Activated T-helper 1 cell treated with anti-CD3 and anti-CD28 coated beads, Interleukin-12 subunit alpha, Interleukin-12 subunit beta, Interleukin-2, Interleukin-4 antibody, amounts not matched to agents 30 ng/mL and 10 ng/mL and 1 ng/mL, durations not matched to agents 14 hours and 24 hours and 36 hours (primary cell): ENCODE measurements at regions of chr3 and their contacts with region 1.

Region 1: DNA sequence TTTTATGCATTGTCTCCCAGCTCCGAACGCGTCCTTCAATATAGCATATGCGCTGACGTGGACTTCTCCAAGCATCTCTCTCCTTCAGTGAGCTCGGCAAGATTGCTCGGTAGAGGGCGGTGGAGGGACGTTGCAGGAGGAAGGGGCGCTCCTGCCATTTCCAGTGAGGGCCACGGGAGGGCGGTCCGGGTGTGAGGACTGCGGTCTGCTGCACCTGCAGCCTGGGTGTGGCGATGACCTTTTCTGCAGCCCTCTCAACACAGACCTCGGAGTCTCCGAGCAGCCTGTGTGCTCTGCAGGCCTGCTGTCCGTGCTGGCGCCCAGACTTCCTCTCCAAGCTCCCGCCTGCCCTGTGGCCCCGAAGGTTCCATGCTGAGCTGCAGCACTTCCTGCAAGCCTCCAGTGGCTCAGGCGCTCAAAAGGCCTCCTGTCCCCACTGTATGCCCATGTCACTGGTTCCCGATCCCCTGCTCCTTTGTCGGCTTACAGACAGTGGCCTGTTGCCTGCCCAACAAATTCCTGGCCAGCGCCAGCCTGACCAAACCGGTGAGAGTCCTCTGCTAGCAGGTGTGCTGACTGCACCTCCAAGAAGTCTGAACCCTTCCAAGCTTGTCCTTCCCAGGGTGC is 8.9 kb upstream of the RTP3 start:
- DNase-seq: peak; percentile 85
- H3K4me3 Mint-ChIP-seq: no peak overlapping the region
- H3K27ac Mint-ChIP-seq: no peak overlapping the region
- H3K4me1 Mint-ChIP-seq: peaks cover 9% of the 10 kb centered on the region
- H3K27me3 Mint-ChIP-seq: peaks cover 4% of the 10 kb centered on the region

Region 2: DNA sequence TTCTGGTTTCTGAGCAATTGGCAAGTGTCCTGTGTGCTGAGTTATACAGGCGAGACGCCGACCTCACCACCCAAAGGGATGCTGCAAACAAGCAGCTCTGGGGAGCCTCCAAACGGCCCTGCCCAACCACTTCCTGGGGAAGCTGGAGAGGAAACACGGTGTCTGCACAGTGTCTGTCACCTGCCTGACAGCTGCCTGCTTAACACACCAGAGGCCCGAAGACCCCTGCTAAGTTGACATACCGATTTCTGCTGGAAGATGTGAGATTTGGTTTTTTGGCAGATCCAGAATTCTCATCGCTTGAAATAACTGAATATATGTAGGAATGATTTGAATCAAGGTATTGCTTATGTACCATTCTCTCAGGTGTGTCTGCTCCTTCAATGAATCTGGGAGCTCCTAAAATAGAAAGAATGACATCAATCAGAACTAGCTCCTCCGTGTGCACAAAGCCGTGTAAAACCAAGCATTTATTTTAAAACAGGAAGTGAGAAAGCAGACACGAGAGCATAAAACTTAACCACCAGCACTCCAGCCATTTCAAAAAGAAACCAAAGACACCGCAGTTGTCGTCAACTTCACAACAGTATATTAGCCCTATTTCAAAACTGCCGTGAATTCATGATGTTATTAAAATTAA is 50.1 kb after region 1 on chr3:
- intact Hi-C with region 1: loop called (anchors 5 kb)
- DNase-seq: peak; percentile 75
- H3K4me3 Mint-ChIP-seq: peak overlapping the region; percentile 74
- H3K27ac Mint-ChIP-seq: peak overlapping the region; percentile 71
- H3K4me1 Mint-ChIP-seq: peaks cover 52% of the 10 kb centered on the region
- H3K27me3 Mint-ChIP-seq: peaks cover 16% of the 10 kb centered on the region

Region 3: DNA sequence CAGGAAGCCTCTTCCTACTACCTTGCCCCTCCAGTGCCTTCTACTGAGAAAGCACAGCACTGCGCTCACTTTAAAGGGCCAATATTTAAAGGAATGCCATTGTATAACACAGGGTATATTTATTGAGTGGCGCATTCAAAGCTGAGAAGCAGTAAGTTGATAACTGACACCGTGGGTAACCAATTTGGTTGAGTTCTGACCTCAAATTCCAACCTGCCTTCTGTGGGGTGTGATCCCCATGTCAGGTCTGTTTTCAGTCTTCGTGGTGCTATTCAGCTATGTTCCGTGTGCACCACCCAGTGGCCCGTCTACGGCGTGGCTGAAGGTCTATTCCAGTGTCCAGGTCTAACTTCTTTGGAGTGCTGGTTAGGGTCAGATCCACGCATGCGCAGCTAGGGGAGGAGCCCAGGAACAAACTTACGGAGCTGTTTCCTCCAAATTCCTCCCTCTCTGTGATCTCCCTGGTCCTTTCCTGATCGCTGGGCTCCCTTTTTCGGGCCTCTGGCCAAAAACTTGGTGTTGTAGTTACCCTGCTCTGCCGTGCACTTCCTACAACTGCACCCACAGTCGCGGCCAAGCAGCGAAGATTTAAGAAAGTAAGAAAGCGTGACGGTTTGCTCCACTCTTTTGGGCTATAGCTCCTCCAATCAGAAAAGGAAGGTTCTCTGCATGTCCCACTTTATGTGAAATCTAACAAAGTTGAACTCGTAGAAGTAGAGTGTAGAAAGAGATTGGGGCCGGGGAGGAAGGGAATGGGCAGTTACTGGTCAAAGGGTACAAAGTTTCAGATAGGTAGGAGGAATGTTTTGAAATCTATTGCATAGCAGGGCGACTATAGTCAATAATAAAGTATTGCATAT is 69.6 kb after region 1 on chr3:
- intact Hi-C with region 1: loop called (anchors 1 kb)
- DNase-seq: peak; percentile 57
- H3K4me3 Mint-ChIP-seq: peak overlapping the region; percentile 82
- H3K27ac Mint-ChIP-seq: no peak overlapping the region
- H3K4me1 Mint-ChIP-seq: peaks cover 13% of the 10 kb centered on the region
- H3K27me3 Mint-ChIP-seq: peaks cover 44% of the 10 kb centered on the region

Region 4: DNA sequence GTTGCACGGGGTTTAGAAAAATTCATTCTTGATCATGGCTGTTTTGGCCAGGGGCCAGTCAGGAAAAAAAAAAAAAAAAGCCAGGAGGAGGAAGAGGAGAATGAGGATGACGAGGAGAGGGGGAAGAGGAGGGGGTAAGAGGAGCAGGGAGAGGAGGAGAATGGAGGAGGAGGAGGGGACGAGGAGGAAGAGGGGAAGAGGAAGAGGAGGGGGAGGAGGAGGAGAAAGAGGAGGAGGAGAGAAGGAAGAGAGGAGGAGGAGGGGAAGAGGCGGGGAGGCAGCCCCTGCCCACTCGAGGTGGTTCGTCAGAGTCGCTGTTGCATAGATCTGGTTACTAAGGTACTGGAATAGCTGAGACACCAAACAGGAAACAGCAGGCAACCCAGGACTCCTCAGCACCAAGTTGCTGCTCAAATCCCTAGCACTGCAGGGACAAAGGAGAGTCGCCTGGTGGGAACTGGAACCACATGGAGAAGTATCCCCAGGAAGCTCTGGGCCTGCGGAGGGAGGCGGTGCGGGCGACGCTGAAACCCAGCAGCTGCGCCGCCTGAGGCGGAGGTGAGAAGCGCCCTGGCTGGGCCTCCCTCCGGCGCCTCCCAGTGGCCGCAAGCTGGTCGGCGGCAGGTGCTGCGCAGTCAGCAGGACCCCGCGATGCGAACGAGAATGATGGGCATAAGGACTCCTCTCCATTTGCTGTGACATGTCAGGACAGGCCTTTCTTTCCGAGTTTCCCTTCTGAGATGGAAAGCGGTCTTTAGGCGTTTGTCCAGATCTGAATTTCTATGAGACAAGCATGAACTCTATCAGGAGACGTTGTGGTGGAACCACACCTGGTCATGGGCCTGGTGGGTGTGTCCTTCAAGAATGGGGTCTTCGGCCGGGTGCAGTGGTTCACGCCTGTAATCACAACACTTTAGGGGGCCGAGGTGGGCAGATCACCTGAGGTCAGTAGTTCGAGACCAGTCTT is 141.0 kb after region 1 on chr3:
- intact Hi-C with region 1: loop called (anchors 1 kb)
- DNase-seq: peak; percentile 68
- H3K4me3 Mint-ChIP-seq: peak overlapping the region; percentile 58
- H3K27ac Mint-ChIP-seq: peak overlapping the region; percentile 40
- H3K4me1 Mint-ChIP-seq: peaks cover 21% of the 10 kb centered on the region
- H3K27me3 Mint-ChIP-seq: peaks cover 7% of the 10 kb centered on the region

Region 5: GRCh38 chr3:46895204-46895660 is 406.4 kb after region 1 on chr3:
- intact Hi-C with region 1: loop called (anchors 1 kb)
- DNase-seq: peak; percentile 61
- H3K4me3 Mint-ChIP-seq: no peak overlapping the region
- H3K27ac Mint-ChIP-seq: no peak overlapping the region
- H3K4me1 Mint-ChIP-seq: peaks cover 4% of the 10 kb centered on the region
- H3K27me3 Mint-ChIP-seq: peaks cover 55% of the 10 kb centered on the region

Region 6: GRCh38 chr3:47016934-47017435 is 528.1 kb after region 1 on chr3:
- intact Hi-C with region 1: no loop called
- DNase-seq: no peak
- H3K4me3 Mint-ChIP-seq: peak overlapping the region; percentile 59
- H3K27ac Mint-ChIP-seq: peak overlapping the region; percentile 87
- H3K4me1 Mint-ChIP-seq: peaks cover 57% of the 10 kb centered on the region
- H3K27me3 Mint-ChIP-seq: no peaks in the 10 kb centered on the region